Activated CD4-positive, alpha-beta T cell treated with anti-CD3 and anti-CD28 coated beads for 36 hours (primary cell): ENCODE measurements at regions of chr11 and their contacts with region 1.

Region 1: GRCh38 chr11:44409558-44410236 is 99.8 kb upstream of the ALX4 start:
- DNase-seq: no peak
- ATAC-seq: no peak
- H3K4me3 Mint-ChIP-seq: no peak overlapping the region
- H3K27ac Mint-ChIP-seq: no peak overlapping the region
- H3K4me1 Mint-ChIP-seq: no peaks in the 10 kb centered on the region
- H3K27me3 Mint-ChIP-seq: peaks cover 19% of the 10 kb centered on the region

Region 2: GRCh38 chr11:44361813-44362212 is 47.9 kb before region 1 on chr11:
- CTCF ChIA-PET with region 1: no interaction called
- POLR2A ChIA-PET with region 1: no interaction called
- intact Hi-C with region 1: loop called in 1 of 2 experiments (anchors 5 kb)
- DNase-seq: no peak
- ATAC-seq: no peak
- H3K4me3 Mint-ChIP-seq: no peak overlapping the region
- H3K27ac Mint-ChIP-seq: no peak overlapping the region
- H3K4me1 Mint-ChIP-seq: no peaks in the 10 kb centered on the region
- H3K27me3 Mint-ChIP-seq: peaks cover 17% of the 10 kb centered on the region